ENCODE measurements at regions of chr22 and their contacts with region 1.

Region 1: DNA sequence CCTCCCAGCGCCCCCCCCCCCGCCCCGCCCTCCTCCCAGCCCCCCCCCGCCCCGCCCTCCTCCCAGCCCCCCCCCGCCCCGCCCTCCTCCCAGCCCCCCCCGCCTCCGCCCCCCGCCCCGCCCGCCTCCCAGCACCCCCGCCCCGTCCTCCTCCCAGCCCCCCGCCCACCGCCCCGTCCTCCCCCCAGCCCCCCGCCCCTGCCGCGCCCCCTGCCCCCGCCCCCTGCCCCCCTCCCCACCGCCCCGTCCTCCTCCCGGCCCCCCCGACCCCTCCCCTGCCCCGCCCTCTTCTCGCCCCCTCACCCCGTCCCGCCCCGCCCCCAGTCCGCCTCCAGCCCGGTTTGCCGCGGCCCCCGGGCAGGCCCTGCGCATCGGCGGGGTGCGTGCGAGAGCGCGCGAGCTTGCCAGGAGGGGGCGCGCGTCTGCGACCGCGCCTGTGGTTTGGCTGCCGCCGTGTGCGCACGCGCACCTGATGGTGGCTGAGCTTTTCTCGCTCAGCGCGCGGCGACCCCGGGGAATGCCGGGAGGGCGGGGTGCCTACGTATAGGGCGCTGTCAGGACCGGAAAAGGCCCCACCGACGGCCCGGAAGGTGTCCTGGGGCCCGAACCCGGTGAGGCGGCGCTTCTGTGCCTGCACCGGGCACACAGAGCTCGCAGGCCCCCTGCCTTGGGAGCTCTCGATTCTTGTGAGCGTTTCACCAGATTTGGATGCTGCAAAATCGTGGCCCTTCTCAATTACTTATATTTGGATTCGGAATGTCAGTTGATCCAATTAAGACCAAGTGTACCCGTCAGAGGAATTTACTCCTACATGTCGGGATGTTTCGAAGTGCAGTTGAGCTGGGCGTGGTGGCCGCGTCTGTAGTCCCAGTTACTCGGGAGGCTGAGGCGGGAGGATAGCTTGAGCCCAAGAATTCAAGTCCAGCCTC is 501 bp upstream of the TTLL12 start:
- DNase-seq: peak; percentile 98
- ATAC-seq: peak; percentile 95
- H3K4me3 Mint-ChIP-seq: peak overlapping the region; percentile 84
- H3K27ac Mint-ChIP-seq: peak overlapping the region; percentile 94
- H3K4me1 Mint-ChIP-seq: peaks cover 18% of the 10 kb centered on the region
- H3K27me3 Mint-ChIP-seq: peaks cover 8% of the 10 kb centered on the region

Region 2: DNA sequence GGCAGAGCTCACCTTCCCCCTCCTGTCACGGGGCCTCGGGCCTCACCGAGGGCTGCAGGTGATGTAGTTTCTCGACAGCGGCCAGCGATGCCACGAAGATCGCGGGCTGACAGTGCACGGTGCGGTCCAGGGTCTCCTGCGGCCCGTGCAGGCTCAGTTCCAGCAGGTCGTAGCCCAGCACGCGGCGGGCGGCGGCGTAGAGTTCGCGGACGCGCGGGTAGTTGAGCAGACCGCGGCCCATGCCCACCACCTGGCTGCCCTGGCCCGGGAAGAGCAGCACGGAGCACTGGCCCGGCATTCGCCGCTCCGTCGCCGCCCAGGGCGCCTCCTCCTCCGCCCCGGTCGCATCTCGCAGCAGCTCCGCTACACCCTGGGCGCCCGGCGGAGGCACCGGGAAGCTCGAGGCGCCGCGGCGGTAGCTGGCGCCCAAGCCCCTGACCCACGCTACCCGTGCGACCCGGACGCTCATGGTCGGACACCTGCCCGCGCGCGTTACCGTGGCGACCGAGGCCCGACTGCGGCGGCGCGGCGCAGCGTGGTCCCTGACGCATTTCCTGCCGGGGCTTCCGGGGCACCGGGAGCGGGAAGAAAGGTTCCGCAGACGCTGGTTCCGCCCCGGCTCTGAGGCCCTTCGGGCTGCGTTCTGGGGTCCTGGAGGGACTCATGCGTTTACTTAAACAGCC is 44.4 kb before region 1 on chr22 and contains the start of gene MCAT:
- POLR2A ChIA-PET with region 1: interaction called, 10 read pairs
- DNase-seq: peak; percentile 90
- ATAC-seq: peak; percentile 81
- H3K4me3 Mint-ChIP-seq: peak within 1 kb of the TSS; percentile 83
- H3K27ac Mint-ChIP-seq: peak within 1 kb of the TSS; percentile 91
- H3K4me1 Mint-ChIP-seq: peaks cover 14% of the 10 kb centered on the region
- H3K27me3 Mint-ChIP-seq: no peaks in the 10 kb centered on the region
- total RNA-seq, gene MCAT: 8.1 to 9.5 TPM

Region 3: GRCh38 chr22:43228330-43228729 is 40.9 kb after region 1 on chr22:
- POLR2A ChIA-PET with region 1: interaction called, 11 read pairs
- DNase-seq: no peak
- ATAC-seq: no peak
- H3K4me3 Mint-ChIP-seq: no peak overlapping the region
- H3K27ac Mint-ChIP-seq: no peak overlapping the region
- H3K4me1 Mint-ChIP-seq: peaks cover 10% of the 10 kb centered on the region
- H3K27me3 Mint-ChIP-seq: peaks cover 11% of the 10 kb centered on the region

Region 4: DNA sequence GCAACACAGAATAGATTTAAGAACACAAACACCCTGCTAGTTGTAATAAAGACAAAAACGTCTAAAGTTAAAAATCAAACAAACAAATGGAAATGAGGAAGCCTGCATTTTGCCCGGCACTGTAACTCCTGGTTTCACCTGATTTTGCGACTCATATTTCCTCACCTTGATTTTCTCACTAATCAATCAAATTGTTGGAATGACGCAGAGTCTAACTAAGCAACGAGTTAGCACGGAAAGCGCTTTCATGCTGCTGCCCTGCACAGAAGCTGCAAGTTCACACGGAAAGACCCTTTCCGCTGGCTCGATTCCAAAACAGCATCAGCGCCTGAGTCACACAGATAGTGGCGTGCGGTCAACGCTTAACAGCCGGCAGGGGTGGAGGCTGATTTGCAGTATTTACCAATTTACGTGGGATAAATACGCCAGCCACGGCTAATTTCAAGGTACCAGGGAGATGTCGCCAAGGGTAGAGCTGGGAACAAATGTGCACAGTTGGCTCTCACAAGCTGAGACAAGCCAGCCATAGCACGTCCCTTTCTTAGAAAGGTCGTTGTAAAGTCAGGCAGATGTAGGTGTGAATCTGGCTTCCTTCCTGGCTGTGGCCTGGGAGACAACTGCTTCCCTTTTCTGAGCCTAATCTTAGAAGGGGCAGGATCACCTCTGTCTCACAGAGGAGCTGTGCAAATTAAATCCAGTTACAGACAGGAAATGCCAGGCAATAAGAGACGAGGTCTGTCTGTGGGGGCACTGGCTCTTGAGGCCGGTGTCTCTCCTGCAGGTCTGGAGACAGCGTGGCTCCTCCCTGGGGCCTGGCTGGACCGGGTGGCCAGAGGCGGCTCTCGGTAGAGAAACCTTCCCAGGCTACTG is 76.4 kb after region 1 on chr22:
- POLR2A ChIA-PET with region 1: interaction called, 10 read pairs
- DNase-seq: peak; percentile 74
- ATAC-seq: peak; percentile 88
- H3K4me3 Mint-ChIP-seq: peak overlapping the region; percentile 68
- H3K27ac Mint-ChIP-seq: peak overlapping the region; percentile 86
- H3K4me1 Mint-ChIP-seq: peaks cover 23% of the 10 kb centered on the region
- H3K27me3 Mint-ChIP-seq: peaks cover 3% of the 10 kb centered on the region

Measured in activated naive CD8-positive, alpha-beta T cell treated with anti-CD3 and anti-CD28 coated beads, Interleukin-2, amount 10 ng/mL, durations not matched to agents 7 days and 5 days (primary cell).